Natural killer cell (primary cell): ENCODE measurements at regions of chr5 and their contacts with region 1.

Region 1: GRCh38 chr5:87400305-87400899 is 12.3 kb downstream of the CCNH start:
- DNase-seq: peak in 1 of 2 donors; percentile 62
- ATAC-seq: peak; percentile 62 to 84 (median 80)
- H3K4me3 ChIP-seq: no peak overlapping the region
- H3K4me3 Mint-ChIP-seq: no peak overlapping the region
- H3K27ac ChIP-seq: no peak overlapping the region
- H3K27ac Mint-ChIP-seq: peak overlapping the region in 1 of 2 donors; percentile 55
- H3K4me1 ChIP-seq: no peaks in the 10 kb centered on the region
- H3K4me1 Mint-ChIP-seq: peaks cover 5 to 13% of the 10 kb centered on the region in 2 donors
- H3K27me3 ChIP-seq: no peaks in the 10 kb centered on the region
- H3K27me3 Mint-ChIP-seq: no peaks in the 10 kb centered on the region
- CTCF ChIP-seq: peak; percentile 80

Region 2: GRCh38 chr5:86880785-86881492 is 519.5 kb before region 1 on chr5:
- intact Hi-C with region 1: loop called (anchors 5 kb)
- DNase-seq: peak in 1 of 2 donors; percentile 63
- ATAC-seq: peak; percentile 72 to 79 (median 75)
- H3K4me3 ChIP-seq: no peak overlapping the region
- H3K4me3 Mint-ChIP-seq: no peak overlapping the region
- H3K27ac ChIP-seq: no peak overlapping the region
- H3K27ac Mint-ChIP-seq: no peak overlapping the region
- H3K4me1 ChIP-seq: no peaks in the 10 kb centered on the region
- H3K4me1 Mint-ChIP-seq: no peaks in the 10 kb centered on the region
- H3K27me3 ChIP-seq: no peaks in the 10 kb centered on the region
- H3K27me3 Mint-ChIP-seq: peaks cover 0 to 4% of the 10 kb centered on the region in 2 donors
- CTCF ChIP-seq: peak; percentile 27

Region 3: GRCh38 chr5:86971034-86971571 is 429.3 kb before region 1 on chr5:
- intact Hi-C with region 1: loop called (anchors 10 kb)
- DNase-seq: peak in 1 of 2 donors; percentile 30
- ATAC-seq: peak; percentile 15 to 41 (median 24)
- H3K4me3 ChIP-seq: no peak overlapping the region
- H3K4me3 Mint-ChIP-seq: no peak overlapping the region
- H3K27ac ChIP-seq: no peak overlapping the region
- H3K27ac Mint-ChIP-seq: no peak overlapping the region
- H3K4me1 ChIP-seq: no peaks in the 10 kb centered on the region
- H3K4me1 Mint-ChIP-seq: peaks cover 9 to 14% of the 10 kb centered on the region in 2 donors
- H3K27me3 ChIP-seq: peaks cover 3% of the 10 kb centered on the region
- H3K27me3 Mint-ChIP-seq: peaks cover 8 to 45% of the 10 kb centered on the region in 2 donors
- CTCF ChIP-seq: peak; percentile 26

Region 4: GRCh38 chr5:87069974-87070624 is 330.3 kb before region 1 on chr5:
- intact Hi-C with region 1: loop called (anchors 1 kb)
- DNase-seq: peak in 1 of 2 donors; percentile 40
- ATAC-seq: peak in 2 of 3 donors; percentile 42 to 58
- H3K4me3 ChIP-seq: no peak overlapping the region
- H3K4me3 Mint-ChIP-seq: no peak overlapping the region
- H3K27ac ChIP-seq: no peak overlapping the region
- H3K27ac Mint-ChIP-seq: peak overlapping the region in 1 of 2 donors; percentile 56
- H3K4me1 ChIP-seq: peaks cover 21% of the 10 kb centered on the region
- H3K4me1 Mint-ChIP-seq: peaks cover 17 to 27% of the 10 kb centered on the region in 2 donors
- H3K27me3 ChIP-seq: no peaks in the 10 kb centered on the region
- H3K27me3 Mint-ChIP-seq: no peaks in the 10 kb centered on the region
- CTCF ChIP-seq: peak; percentile 41

Region 5: GRCh38 chr5:87452837-87453236 is 52.4 kb after region 1 on chr5:
- intact Hi-C with region 1: no loop called
- DNase-seq: no peak
- ATAC-seq: no peak
- H3K4me3 ChIP-seq: no peak overlapping the region
- H3K4me3 Mint-ChIP-seq: no peak overlapping the region
- H3K27ac ChIP-seq: no peak overlapping the region
- H3K27ac Mint-ChIP-seq: no peak overlapping the region
- H3K4me1 ChIP-seq: no peaks in the 10 kb centered on the region
- H3K4me1 Mint-ChIP-seq: no peaks in the 10 kb centered on the region
- H3K27me3 ChIP-seq: peaks cover 2% of the 10 kb centered on the region
- H3K27me3 Mint-ChIP-seq: peaks cover 17 to 39% of the 10 kb centered on the region in 2 donors
- CTCF ChIP-seq: no peak